ENCODE measurements at regions of chr3 and their contacts with region 1.

Region 1: DNA sequence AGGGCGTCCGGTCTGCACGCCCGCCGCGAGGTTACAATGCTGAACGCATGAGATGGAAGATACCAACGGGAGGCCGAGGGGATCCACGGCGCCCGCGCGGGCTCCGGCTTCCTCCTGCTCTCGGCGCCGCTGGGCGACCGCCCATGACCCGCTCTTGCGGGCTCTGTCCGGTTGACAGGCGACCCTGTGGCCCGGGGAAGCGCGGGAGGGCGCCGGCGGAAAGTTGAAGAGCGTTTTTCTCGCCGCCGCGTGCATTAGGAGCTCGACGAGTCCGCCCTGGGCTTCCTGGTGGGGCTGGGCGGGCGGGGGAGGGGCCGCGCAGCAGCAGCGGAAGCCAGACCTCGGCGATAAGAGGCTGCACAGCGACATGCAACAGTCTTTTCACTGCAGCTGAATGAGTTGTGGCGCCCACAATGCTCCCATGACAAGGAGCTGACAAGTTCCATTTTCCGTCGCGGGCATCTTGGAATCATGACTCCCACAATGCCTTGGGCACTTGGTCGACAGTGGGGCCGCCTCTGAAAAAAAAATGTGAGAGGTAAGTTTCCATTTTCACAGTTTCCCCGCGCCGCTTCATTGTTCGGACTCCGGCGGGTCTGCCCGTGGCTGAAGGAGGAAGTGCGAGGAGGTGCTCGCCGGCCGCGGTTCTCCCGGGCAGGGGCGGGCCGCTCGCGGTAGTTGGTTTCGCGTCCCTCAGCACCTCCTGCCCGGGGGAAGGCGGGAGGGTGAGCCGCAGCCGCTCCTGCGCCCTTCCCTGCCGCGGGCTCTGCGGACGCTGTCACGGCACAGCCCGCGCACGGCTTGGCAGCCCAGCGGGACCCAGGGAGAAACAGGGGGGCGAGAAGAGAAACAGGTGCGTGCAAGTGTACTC is at the start of gene MBNL1:
- DNase-seq: peak; percentile 70
- ATAC-seq: peak; percentile 71
- H3K4me3 ChIP-seq: peak within 1 kb of the TSS; percentile 77 to 88
- H3K27ac ChIP-seq: peak within 1 kb of the TSS; percentile 90
- H3K4me1 ChIP-seq: peaks cover 50 to 65% of the 10 kb centered on the region in 2 experiments
- H3K27me3 ChIP-seq: no peaks in the 10 kb centered on the region
- CTCF ChIP-seq: no peak
- POLR2A ChIP-seq: peak; percentile 64
- RAD21 ChIP-seq: peak; percentile 13; the same call in 1 of the 2 replicates
- total RNA-seq, gene MBNL1: 200 TPM

Region 2: DNA sequence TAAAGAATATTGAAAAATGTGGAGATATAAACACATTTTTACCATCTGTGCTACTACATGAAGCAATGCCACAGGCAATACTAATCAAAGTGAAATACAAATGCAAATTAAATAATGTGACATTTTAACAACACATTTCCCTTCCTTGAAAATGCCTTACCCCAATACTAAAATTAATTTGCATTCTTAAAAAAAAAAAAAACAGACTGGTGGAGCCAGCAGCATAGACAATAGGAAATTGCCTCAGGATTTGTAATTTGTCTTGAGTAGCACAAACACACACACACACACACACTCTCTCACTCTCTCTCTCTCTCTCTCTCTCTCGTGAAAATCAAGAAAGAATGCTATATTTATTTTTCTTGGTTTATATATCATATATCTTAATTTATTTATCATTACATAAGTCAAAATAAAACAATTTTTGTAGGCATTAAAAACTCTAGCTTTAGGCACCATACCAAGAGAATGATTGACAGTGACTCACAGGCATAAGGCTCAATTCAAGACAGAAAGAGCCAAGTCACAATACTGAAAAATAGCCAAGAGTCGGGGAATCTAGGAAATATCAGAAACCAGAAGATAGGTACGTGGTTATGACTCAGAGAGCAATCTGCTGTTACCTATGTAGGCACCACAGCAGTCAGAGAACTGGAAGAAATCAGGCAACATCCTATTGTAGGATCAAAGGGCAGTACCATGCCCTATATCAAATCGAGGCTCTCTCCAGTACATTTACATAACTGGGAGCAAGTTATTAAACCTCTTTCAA is 372.4 kb before region 1 on chr3:
- CTCF ChIA-PET with region 1: no interaction called
- POLR2A ChIA-PET with region 1: no interaction called
- RAD21 ChIA-PET with region 1: no interaction called
- intact Hi-C with region 1: no loop called
- DNase-seq: peak; percentile 48
- ATAC-seq: peak; percentile 81
- H3K4me3 ChIP-seq: no peak overlapping the region
- H3K27ac ChIP-seq: no peak overlapping the region; the same call in 1 of the 2 replicates
- H3K4me1 ChIP-seq: peaks cover 3 to 12% of the 10 kb centered on the region in 2 experiments; a peak in 3 of 4 replicates
- H3K27me3 ChIP-seq: no peaks in the 10 kb centered on the region
- CTCF ChIP-seq: no peak
- POLR2A ChIP-seq: no peak
- RAD21 ChIP-seq: no peak

Region 3: DNA sequence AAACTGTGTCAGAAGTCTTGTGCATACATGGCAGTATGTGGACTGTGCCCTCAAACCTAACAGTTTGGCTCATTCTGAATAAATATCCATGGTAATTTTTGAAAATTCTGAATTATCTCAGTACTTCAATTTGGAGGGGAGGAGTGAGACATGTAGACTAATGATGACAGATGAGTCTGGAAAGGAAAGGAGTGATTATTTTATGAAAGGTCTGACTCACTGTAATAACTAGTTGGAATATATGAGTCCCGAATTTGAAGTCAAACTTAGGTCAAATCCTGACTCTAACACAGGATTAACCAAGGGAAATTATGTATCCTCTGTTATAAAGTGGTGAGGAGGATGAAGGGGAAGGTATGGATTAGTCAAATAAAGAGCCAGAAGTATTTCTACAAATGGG is 356.8 kb before region 1 on chr3:
- CTCF ChIA-PET with region 1: no interaction called
- POLR2A ChIA-PET with region 1: no interaction called
- RAD21 ChIA-PET with region 1: no interaction called
- intact Hi-C with region 1: no loop called
- DNase-seq: no peak
- ATAC-seq: no peak
- H3K4me3 ChIP-seq: no peak overlapping the region
- H3K27ac ChIP-seq: no peak overlapping the region
- H3K4me1 ChIP-seq: no peaks in the 10 kb centered on the region
- H3K27me3 ChIP-seq: no peaks in the 10 kb centered on the region
- CTCF ChIP-seq: no peak
- POLR2A ChIP-seq: no peak
- RAD21 ChIP-seq: no peak

Region 4: GRCh38 chr3:151976211-151977050 is 292.4 kb before region 1 on chr3:
- CTCF ChIA-PET with region 1: no interaction called
- POLR2A ChIA-PET with region 1: no interaction called
- RAD21 ChIA-PET with region 1: no interaction called
- intact Hi-C with region 1: loop called (anchors 5 kb)
- DNase-seq: peak; percentile 94
- ATAC-seq: peak; percentile 81
- H3K4me3 ChIP-seq: peak overlapping the region in 1 of 2 experiments; percentile 12; a peak in 1 of 4 replicates
- H3K27ac ChIP-seq: peak overlapping the region; percentile 92
- H3K4me1 ChIP-seq: peaks cover 53 to 64% of the 10 kb centered on the region in 2 experiments
- H3K27me3 ChIP-seq: no peaks in the 10 kb centered on the region
- CTCF ChIP-seq: no peak
- POLR2A ChIP-seq: no peak
- RAD21 ChIP-seq: peak; percentile 34

Region 5: DNA sequence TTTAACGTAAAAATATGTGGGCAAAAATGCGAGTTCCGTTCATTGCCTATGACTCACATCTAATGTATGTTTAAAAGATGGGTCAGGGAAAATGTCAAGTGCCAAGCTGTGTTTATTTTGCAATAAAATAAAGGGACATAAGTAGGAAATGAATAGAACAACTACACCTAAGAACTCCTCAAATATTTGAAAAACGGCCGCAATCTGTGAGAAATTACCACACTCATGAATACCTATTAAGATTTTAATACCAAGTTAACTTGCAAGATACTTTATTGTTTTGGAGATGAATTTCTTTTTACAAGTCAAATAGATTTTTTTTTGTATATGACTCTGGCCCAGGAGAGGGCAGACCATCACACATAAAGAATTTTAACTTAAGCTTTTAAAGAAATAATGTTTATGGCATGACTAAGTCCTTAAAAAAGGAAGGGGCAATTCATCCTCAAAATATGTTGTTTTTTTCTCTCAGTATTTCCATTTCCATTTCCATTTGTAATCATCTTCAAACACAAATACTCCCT is 242.7 kb before region 1 on chr3:
- CTCF ChIA-PET with region 1: no interaction called
- POLR2A ChIA-PET with region 1: interaction called, 5 read pairs
- RAD21 ChIA-PET with region 1: no interaction called
- intact Hi-C with region 1: loop called (anchors 2 kb)
- DNase-seq: peak; percentile 62
- ATAC-seq: peak; percentile 2; the same call in 1 of the 2 replicates
- H3K4me3 ChIP-seq: peak overlapping the region in 1 of 2 experiments; percentile 16; a peak in 2 of 4 replicates
- H3K27ac ChIP-seq: peak overlapping the region; percentile 97; the same call in 1 of the 2 replicates
- H3K4me1 ChIP-seq: peaks cover 44 to 65% of the 10 kb centered on the region in 2 experiments
- H3K27me3 ChIP-seq: no peaks in the 10 kb centered on the region
- CTCF ChIP-seq: peak in 2 of 3 experiments; percentile 39 to 45; a peak in 3 of 6 replicates
- POLR2A ChIP-seq: no peak
- RAD21 ChIP-seq: peak; percentile 59

Region 6: DNA sequence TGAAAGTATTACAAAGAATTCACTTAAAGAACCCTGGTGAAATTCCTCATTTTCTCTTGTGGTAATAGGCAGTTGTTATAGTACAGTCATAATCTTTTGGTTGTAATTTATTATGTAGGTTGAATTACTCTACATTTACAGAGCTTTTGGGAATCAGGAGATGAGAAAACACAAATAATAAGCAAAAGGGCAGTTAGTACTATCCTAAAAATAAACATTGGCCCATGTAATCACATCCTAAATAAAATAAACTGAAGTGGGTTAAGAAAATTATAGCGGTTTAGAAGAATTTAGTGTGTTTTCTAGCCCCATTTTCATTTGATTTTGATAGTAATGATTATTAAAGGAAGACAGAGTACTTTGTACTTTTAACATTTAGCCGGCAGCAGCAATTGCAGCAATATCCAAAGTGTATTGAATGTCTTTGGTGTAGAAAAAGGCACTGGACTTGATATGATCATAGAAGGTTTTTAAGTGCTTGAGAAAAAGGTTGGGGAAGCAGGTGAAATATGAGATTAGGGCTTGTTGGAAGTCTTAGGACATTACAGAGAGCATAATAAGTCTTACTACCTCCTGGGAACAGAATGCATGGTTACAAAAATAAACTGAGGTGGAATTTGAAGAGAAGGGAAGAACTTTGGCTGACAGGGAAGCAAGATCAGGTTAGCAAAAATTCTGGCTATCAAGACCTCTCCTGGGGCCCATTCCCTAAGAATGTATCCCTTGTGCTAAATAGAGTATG is 79.8 kb after region 1 on chr3:
- CTCF ChIA-PET with region 1: no interaction called
- POLR2A ChIA-PET with region 1: no interaction called
- RAD21 ChIA-PET with region 1: no interaction called
- intact Hi-C with region 1: no loop called
- DNase-seq: no peak
- ATAC-seq: no peak
- H3K4me3 ChIP-seq: no peak overlapping the region
- H3K27ac ChIP-seq: peak overlapping the region; percentile 2; the same call in 1 of the 2 replicates
- H3K4me1 ChIP-seq: peaks cover 39 to 41% of the 10 kb centered on the region in 2 experiments
- H3K27me3 ChIP-seq: no peaks in the 10 kb centered on the region
- CTCF ChIP-seq: no peak
- POLR2A ChIP-seq: no peak
- RAD21 ChIP-seq: no peak

Region 7: DNA sequence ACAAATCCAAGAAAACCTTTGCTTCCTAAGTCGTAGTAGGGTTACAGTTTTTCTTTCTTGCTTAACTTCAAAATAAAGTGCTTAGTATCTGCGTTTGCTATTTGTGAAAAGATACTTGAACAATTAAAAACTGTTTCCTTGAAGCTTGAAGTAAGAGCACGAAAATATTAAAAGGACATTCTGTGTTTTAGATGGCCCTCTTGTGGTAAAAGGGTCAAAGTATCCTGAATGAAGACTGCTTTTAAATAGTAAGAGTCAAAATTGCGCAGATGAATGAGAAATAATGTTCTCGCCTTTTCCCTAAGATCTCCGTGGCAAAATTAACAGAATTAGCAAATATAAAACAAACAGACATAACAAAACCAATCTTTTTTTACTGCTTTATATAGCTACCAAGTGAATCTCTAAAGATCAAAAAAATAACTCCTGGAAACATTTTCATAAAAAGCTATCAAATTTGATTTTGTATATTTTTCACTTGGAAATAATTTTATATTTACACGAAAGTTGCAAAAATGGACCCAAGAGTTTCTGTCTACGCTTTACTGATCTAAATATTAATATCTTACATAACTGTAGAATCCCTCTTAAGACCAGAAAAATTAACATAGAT is 175.3 kb after region 1 on chr3:
- CTCF ChIA-PET with region 1: no interaction called
- POLR2A ChIA-PET with region 1: interaction called, 5 read pairs
- RAD21 ChIA-PET with region 1: no interaction called
- intact Hi-C with region 1: loop called (anchors 5 kb)
- DNase-seq: peak; percentile 38
- ATAC-seq: peak; percentile 61
- H3K4me3 ChIP-seq: no peak overlapping the region
- H3K27ac ChIP-seq: peak overlapping the region; percentile 17; the same call in 1 of the 2 replicates
- H3K4me1 ChIP-seq: peaks cover 8 to 12% of the 10 kb centered on the region in 2 experiments; a peak in 3 of 4 replicates
- H3K27me3 ChIP-seq: no peaks in the 10 kb centered on the region
- CTCF ChIP-seq: peak; percentile 49 to 69 (median 52); a peak in 5 of 6 replicates
- POLR2A ChIP-seq: no peak
- RAD21 ChIP-seq: peak; percentile 86

Region 8: GRCh38 chr3:153052096-153052460 is 783.3 kb after region 1 on chr3:
- CTCF ChIA-PET with region 1: no interaction called
- POLR2A ChIA-PET with region 1: no interaction called
- RAD21 ChIA-PET with region 1: no interaction called
- intact Hi-C with region 1: loop called (anchors 5 kb)
- DNase-seq: peak; percentile 95
- ATAC-seq: peak; percentile 81
- H3K4me3 ChIP-seq: peak overlapping the region; percentile 8 to 28; a peak in 3 of 4 replicates
- H3K27ac ChIP-seq: peak overlapping the region; percentile 77
- H3K4me1 ChIP-seq: peaks cover 22 to 40% of the 10 kb centered on the region in 2 experiments
- H3K27me3 ChIP-seq: no peaks in the 10 kb centered on the region
- CTCF ChIP-seq: no peak
- POLR2A ChIP-seq: no peak
- RAD21 ChIP-seq: peak; percentile 45

Measured in HCT116 (cell line).